MCF 10A (cell line): ENCODE measurements at regions of chr14 and their contacts with region 1.

Region 1: GRCh38 chr14:28596391-28596790 is 170.2 kb upstream of the FOXG1 start:
- DNase-seq: peak; percentile 77
- H3K4me3 Mint-ChIP-seq: no peak overlapping the region
- H3K27ac Mint-ChIP-seq: no peak overlapping the region
- H3K4me1 Mint-ChIP-seq: peaks cover 22% of the 10 kb centered on the region
- H3K27me3 Mint-ChIP-seq: no peaks in the 10 kb centered on the region
- CTCF ChIP-seq: peak; percentile 31

Region 2: GRCh38 chr14:28375295-28375694 is 221.1 kb before region 1 on chr14:
- CTCF ChIA-PET with region 1: interaction called, 20 read pairs
- POLR2A ChIA-PET with region 1: interaction called, 4 read pairs
- intact Hi-C with region 1: no loop called
- DNase-seq: peak; percentile 64
- H3K4me3 Mint-ChIP-seq: no peak overlapping the region
- H3K27ac Mint-ChIP-seq: peak overlapping the region; percentile 31
- H3K4me1 Mint-ChIP-seq: peaks cover 11% of the 10 kb centered on the region
- H3K27me3 Mint-ChIP-seq: no peaks in the 10 kb centered on the region
- CTCF ChIP-seq: peak; percentile 35